PC-3 (cell line): ENCODE measurements at regions of chr13 and their contacts with region 1.

Region 1: GRCh38 chr13:78978381-78978998 is 319.5 kb upstream of the OBI1 start:
- DNase-seq: peak; percentile 68
- ATAC-seq: peak; percentile 76
- H3K4me3 ChIP-seq: no peak overlapping the region
- H3K27ac ChIP-seq: no peak overlapping the region
- H3K4me1 ChIP-seq: no peaks in the 10 kb centered on the region
- H3K27me3 ChIP-seq: peaks cover 40% of the 10 kb centered on the region
- CTCF ChIP-seq: peak; percentile 66

Region 2: DNA sequence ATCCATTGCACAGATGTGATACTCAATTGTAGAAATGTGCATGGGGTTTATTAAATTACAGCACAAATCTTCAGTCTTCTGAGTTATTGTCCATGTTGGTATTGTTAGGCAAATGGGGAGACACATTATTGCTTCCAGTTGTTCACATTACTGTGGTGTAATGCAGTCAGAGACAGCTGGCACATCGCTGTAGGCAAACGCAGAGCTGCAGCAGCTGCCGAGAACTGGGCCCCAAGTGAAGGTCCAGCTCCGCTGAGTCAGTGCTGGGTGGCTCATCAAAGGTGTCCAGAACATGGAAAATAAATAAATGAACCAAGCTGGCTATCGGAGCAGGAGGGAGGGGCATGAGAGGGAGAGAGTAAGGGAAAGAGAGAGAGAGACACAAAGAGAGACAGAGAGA is 20.5 kb before region 1 on chr13:
- CTCF ChIA-PET with region 1: no interaction called
- POLR2A ChIA-PET with region 1: no interaction called
- intact Hi-C with region 1: loop called (anchors 1 kb)
- DNase-seq: no peak
- ATAC-seq: no peak
- H3K4me3 ChIP-seq: no peak overlapping the region
- H3K27ac ChIP-seq: no peak overlapping the region
- H3K4me1 ChIP-seq: no peaks in the 10 kb centered on the region
- H3K27me3 ChIP-seq: peaks cover 16% of the 10 kb centered on the region
- CTCF ChIP-seq: no peak

Region 3: GRCh38 chr13:79003989-79004898 is 25.8 kb after region 1 on chr13:
- CTCF ChIA-PET with region 1: no interaction called
- POLR2A ChIA-PET with region 1: no interaction called
- intact Hi-C with region 1: no loop called
- DNase-seq: no peak
- ATAC-seq: no peak
- H3K4me3 ChIP-seq: no peak overlapping the region
- H3K27ac ChIP-seq: no peak overlapping the region
- H3K4me1 ChIP-seq: no peaks in the 10 kb centered on the region
- H3K27me3 ChIP-seq: peaks cover 19% of the 10 kb centered on the region
- CTCF ChIP-seq: no peak